ENCODE measurements at regions of chr15 and their contacts with region 1.

Region 1: GRCh38 chr15:75069301-75069925 is 46.0 kb downstream of the PPCDC start:
- DNase-seq: peak; percentile 22
- H3K4me3 Mint-ChIP-seq: peak overlapping the region; percentile 46
- H3K27ac Mint-ChIP-seq: peak overlapping the region; percentile 82
- H3K4me1 Mint-ChIP-seq: peaks cover 88% of the 10 kb centered on the region
- H3K27me3 Mint-ChIP-seq: no peaks in the 10 kb centered on the region

Region 2: DNA sequence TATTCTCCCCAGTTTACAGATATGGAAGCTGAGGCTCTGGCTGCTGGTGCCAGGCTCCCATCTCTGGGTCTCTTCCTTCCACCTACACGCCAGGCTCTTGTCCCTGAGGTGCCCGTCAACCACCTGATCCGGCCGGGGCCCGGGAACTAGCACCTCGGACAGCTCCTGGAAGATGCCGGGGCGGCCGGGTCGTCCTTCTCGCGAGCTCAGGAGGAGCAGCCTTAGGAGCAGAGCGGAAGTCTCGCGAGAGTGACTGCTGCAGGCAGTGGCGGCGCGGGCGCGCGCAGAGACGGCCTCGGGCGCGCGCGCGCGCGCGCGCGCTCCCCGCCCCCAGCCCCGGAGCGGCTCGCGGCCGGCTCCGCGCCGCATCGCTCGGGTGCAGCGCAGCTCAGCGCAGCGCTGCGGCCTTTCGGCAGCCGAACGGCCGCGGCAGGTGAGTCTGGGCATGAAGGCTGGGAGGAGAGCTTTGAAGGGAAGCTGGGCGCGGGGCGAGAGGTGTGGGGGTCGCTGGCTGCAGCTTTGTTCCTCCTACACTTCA is 74.1 kb before region 1 on chr15 and contains the start of gene SCAMP5:
- intact Hi-C with region 1: no loop called
- DNase-seq: peak; percentile 92
- H3K4me3 Mint-ChIP-seq: peak within 1 kb of the TSS; percentile 70
- H3K27ac Mint-ChIP-seq: no peak within 1 kb of the TSS
- H3K4me1 Mint-ChIP-seq: peaks cover 4% of the 10 kb centered on the region
- H3K27me3 Mint-ChIP-seq: peaks cover 33% of the 10 kb centered on the region
- total RNA-seq, gene SCAMP5: 2.0 and 3.5 TPM in 2 replicates

Region 3: DNA sequence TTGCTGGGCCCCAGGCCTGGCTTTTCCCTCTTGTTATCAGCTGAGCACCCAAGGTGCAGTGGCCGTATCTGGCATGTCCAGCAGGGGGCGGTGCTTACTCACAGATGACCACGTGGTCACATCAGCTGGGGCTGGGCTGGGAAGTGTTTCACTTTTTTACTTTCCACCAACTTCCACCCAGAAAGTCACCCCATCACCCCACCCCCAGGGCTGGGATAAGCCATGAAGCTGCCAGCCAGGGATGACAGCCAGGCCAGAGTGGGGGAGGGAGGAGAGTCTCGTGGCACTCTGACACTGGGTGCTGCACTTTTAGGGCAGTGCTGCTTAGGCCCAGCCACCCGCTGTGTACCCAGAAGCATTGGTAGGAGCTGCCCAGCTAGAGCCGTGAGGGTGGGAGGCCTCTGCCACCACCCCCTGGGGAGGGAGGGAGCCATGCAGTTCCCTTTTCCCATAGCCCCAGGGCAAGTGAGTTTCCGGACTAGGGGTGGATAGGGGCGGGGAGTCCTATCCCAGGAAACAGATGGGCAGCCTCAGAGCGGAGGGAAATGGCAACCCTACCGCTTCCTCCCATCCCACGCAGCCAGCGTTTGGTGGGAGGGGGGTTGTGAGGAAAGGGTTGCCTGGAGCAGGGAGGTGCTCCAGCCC is 39.9 kb before region 1 on chr15:
- intact Hi-C with region 1: loop called (anchors 5 kb)
- DNase-seq: peak; percentile 80
- H3K4me3 Mint-ChIP-seq: peak overlapping the region; percentile 37
- H3K27ac Mint-ChIP-seq: peak overlapping the region; percentile 51
- H3K4me1 Mint-ChIP-seq: peaks cover 52% of the 10 kb centered on the region
- H3K27me3 Mint-ChIP-seq: no peaks in the 10 kb centered on the region

Region 4: DNA sequence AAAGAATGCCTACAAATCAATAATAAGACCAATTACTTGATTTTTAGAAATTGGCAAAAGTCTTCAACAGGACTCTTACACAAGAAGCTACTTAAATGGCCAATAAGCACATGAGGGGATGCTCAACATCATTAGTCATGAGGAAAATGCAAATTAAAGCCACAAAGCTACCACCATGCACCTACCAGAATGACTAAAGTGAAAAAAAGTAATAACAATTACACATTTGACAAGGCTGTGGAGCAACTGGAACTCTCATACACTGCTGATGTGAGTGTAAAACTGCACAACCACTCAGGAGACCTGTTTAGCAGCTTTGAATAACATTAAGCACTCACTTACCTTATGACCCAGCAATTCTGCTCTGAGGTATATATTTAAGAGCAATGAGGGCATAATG is 22.4 kb after region 1 on chr15:
- intact Hi-C with region 1: loop called (anchors 1 kb)
- DNase-seq: no peak
- H3K4me3 Mint-ChIP-seq: no peak overlapping the region
- H3K27ac Mint-ChIP-seq: peak overlapping the region; percentile 42
- H3K4me1 Mint-ChIP-seq: peaks cover 28% of the 10 kb centered on the region
- H3K27me3 Mint-ChIP-seq: peaks cover 8% of the 10 kb centered on the region

Region 5: GRCh38 chr15:75104804-75105535 is 35.6 kb after region 1 on chr15:
- intact Hi-C with region 1: loop called (anchors 1 kb)
- DNase-seq: peak; percentile 55
- H3K4me3 Mint-ChIP-seq: peak overlapping the region; percentile 28
- H3K27ac Mint-ChIP-seq: peak overlapping the region; percentile 89
- H3K4me1 Mint-ChIP-seq: peaks cover 52% of the 10 kb centered on the region
- H3K27me3 Mint-ChIP-seq: peaks cover 5% of the 10 kb centered on the region

Region 6: GRCh38 chr15:75153087-75153486 is 83.7 kb after region 1 on chr15:
- intact Hi-C with region 1: loop called (anchors 5 kb)
- DNase-seq: peak; percentile 23
- H3K4me3 Mint-ChIP-seq: no peak overlapping the region
- H3K27ac Mint-ChIP-seq: no peak overlapping the region
- H3K4me1 Mint-ChIP-seq: peaks cover 41% of the 10 kb centered on the region
- H3K27me3 Mint-ChIP-seq: peaks cover 2% of the 10 kb centered on the region